Calu3 (cell line): ENCODE measurements at regions of chr5 and their contacts with region 1.

Region 1: GRCh38 chr5:60687927-60688720 is 11.8 kb downstream of the DEPDC1B start:
- DNase-seq: peak; percentile 43
- H3K4me3 Mint-ChIP-seq: no peak overlapping the region
- H3K27ac Mint-ChIP-seq: no peak overlapping the region
- H3K4me1 Mint-ChIP-seq: peaks cover 63% of the 10 kb centered on the region
- H3K27me3 Mint-ChIP-seq: no peaks in the 10 kb centered on the region
- CTCF ChIP-seq: peak; percentile 66

Region 2: GRCh38 chr5:60699530-60700382 is 11.6 kb after region 1 on chr5 and contains the start of gene DEPDC1B:
- CTCF ChIA-PET with region 1: interaction called, 16 read pairs
- intact Hi-C with region 1: no loop called
- DNase-seq: peak; percentile 94
- H3K4me3 Mint-ChIP-seq: peak within 1 kb of the TSS; percentile 94
- H3K27ac Mint-ChIP-seq: peak within 1 kb of the TSS; percentile 93
- H3K4me1 Mint-ChIP-seq: peaks cover 64% of the 10 kb centered on the region
- H3K27me3 Mint-ChIP-seq: no peaks in the 10 kb centered on the region
- CTCF ChIP-seq: no peak
- total RNA-seq, gene DEPDC1B: 63.1 and 80.7 TPM in 2 replicates